A549 (cell line): ENCODE measurements at regions of chr14 and their contacts with region 1.

Region 1: GRCh38 chr14:104650057-104650981 is 39.1 kb upstream of the INF2 start:
- DNase-seq: peak; percentile 53 to 82
- ATAC-seq: peak; percentile 88 to 95
- H3K4me3 ChIP-seq: peak overlapping the region; percentile 33
- H3K27ac ChIP-seq: peak overlapping the region; percentile 66 to 86
- H3K4me1 ChIP-seq: peaks cover 5% of the 10 kb centered on the region; the same call in 2 of the 3 replicates
- CTCF ChIP-seq: peak; percentile 98
- EP300 ChIP-seq: no peak
- POLR2A ChIP-seq: no peak
- RAD21 ChIP-seq: peak; percentile 87 to 97

Region 2: DNA sequence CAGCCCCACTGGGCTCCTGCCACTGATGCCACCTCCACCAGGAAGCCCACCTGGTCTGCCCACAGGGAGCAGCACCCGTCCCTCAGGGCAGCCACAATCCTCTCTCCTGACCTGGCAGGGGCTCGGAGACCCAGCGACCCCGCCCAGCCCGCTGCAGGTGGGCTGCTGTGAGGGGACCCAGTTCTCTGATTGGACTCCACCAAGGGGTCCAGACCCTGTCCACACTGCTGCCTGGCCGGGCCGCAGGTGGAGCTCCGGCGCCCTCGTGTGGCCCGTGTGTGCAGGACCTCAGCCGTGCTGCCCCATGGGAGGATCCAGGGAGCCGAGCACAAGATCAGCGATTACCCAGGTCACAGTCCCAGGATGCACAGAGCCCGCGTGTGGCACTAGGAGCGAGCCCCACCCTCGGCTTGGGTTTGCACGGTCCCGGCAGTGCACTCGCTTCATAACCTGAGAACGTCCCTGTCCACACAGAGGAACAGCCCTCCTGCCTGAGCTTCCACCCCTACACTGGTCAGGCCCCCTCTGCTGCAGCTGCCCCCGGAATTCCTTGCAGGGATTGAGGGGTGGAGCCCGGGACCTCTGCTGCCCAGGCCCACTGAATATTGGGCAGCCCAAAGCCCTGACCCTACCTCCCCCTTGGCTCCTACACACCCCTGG is 10.3 kb before region 1 on chr14:
- CTCF ChIA-PET with region 1: interaction called, 13 read pairs
- POLR2A ChIA-PET with region 1: no interaction called
- DNase-seq: peak; percentile 77 to 87
- ATAC-seq: peak; percentile 88 to 98
- H3K4me3 ChIP-seq: no peak overlapping the region
- H3K27ac ChIP-seq: peak overlapping the region; percentile 42 to 55; a peak in 1 of 6 replicates
- H3K4me1 ChIP-seq: peaks cover 11% of the 10 kb centered on the region; the same call in 1 of the 3 replicates
- CTCF ChIP-seq: peak; percentile 92
- EP300 ChIP-seq: no peak
- POLR2A ChIP-seq: no peak
- RAD21 ChIP-seq: peak; percentile 95 to 96

Region 3: GRCh38 chr14:104856869-104857860 is 206.8 kb after region 1 on chr14:
- CTCF ChIA-PET with region 1: no interaction called
- POLR2A ChIA-PET with region 1: no interaction called
- DNase-seq: no peak
- ATAC-seq: peak; percentile 24 to 35; a peak in 2 of 6 replicates
- H3K4me3 ChIP-seq: no peak overlapping the region
- H3K27ac ChIP-seq: no peak overlapping the region
- H3K4me1 ChIP-seq: no peaks in the 10 kb centered on the region
- CTCF ChIP-seq: no peak
- EP300 ChIP-seq: no peak
- POLR2A ChIP-seq: no peak
- RAD21 ChIP-seq: no peak